Ascending aorta (tissue), 2 donors: ENCODE measurements at regions of chr15 and their contacts with region 1.

Region 1: DNA sequence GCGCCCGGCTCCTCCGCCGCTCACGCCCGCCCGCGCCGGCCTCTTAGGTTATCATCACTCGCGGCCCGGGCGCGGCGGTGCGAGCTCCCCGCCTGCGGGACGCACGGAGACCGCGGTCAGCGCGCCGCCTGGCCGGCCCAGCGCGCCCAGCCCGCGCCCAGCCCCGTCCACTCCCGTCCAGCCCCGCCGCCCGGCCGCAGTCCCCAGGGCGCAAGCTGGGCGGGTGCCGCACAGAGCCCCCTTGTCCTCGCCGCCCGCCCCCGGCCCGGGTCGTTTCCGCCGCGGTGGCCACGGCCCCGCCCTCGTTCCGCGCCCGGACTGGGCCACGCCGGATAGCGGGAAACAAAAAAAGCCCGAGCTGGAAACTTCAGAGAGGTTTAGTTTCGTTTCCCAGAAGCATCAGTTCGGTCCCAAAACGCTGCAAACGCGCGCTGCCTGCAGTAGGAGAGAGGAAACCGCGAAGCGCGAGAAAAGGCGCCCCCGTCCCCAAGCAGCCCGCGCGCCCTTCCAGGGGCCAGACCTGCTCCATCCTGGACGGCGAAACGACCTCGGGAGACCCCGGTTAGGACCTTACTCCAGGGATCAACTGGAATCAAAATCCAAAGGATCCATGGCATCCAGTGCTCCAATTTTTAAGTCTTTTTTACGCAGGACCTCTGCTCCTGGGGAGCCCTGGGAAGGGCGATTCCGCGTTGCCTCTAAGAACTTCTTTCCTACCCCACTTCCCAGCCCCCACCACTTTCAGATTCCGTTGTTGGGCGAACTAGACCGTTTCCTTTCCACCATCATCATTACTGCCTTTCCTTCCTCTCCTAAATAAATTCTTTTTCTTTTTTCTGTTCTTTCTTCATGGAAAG is at the start of gene ATP10A:
- DNase-seq: peak in 1 of 2 donors; percentile 75
- H3K4me3 ChIP-seq: peak within 1 kb of the TSS; percentile 80 to 96
- H3K27ac ChIP-seq: peak within 1 kb of the TSS; percentile 94 to 95
- H3K4me1 ChIP-seq: peaks cover 7 to 18% of the 10 kb centered on the region in 2 donors
- H3K27me3 ChIP-seq: no peaks in the 10 kb centered on the region
- CTCF ChIP-seq: peak in 1 of 3 experiments; percentile 20
- total RNA-seq, gene ATP10A: 26.7 TPM

Region 2: GRCh38 chr15:24772686-24773373 is 1090.5 kb before region 1 on chr15:
- intact Hi-C with region 1: loop called (anchors 10 kb)
- DNase-seq: peak in 1 of 2 donors; percentile 79
- H3K4me3 ChIP-seq: peak overlapping the region; percentile 38 to 62
- H3K27ac ChIP-seq: peak overlapping the region; percentile 31 to 61
- H3K4me1 ChIP-seq: no peaks in the 10 kb centered on the region
- H3K27me3 ChIP-seq: no peaks in the 10 kb centered on the region
- CTCF ChIP-seq: no peak

Region 3: GRCh38 chr15:25568751-25569150 is 294.6 kb before region 1 on chr15:
- intact Hi-C with region 1: loop called (anchors 5 kb)
- DNase-seq: peak; percentile 25 to 83
- H3K4me3 ChIP-seq: no peak overlapping the region
- H3K27ac ChIP-seq: peak overlapping the region; percentile 75 to 77
- H3K4me1 ChIP-seq: peaks cover 4 to 61% of the 10 kb centered on the region in 2 donors
- H3K27me3 ChIP-seq: no peaks in the 10 kb centered on the region
- CTCF ChIP-seq: no peak

Region 4: DNA sequence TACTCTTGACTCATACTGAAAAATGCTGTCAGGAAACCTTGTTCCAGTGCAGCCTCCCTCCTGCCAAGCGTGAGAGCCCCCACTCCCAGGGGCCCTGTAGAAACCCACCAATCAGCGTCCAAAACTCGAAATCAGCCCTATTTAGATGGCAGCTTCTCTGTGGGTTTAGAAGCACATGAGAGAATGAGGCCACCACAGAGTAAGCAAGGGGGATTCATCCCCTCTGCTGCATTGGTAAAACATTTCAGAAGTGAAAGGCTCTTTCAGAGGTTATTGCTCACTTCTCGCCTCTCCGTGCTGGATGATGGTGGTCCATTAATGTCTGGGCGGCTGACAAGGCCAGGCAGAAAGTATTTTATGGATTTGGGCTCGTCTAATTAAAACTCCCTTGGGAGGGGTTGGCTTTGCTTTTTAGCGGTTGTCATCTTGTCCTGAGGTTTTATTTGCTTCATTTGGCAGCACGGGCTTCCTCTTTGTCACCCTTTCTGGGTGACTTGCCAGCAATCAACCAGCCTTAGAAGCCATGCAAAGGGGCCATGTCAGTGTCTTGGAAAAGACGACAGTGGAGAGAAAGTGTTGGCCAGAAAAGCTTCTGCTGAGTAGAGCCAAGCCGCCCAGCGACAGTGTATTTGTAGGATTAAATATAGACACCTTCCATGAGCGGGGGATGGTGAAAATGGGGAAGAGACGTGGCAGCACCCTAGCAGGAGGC is 145.7 kb before region 1 on chr15:
- intact Hi-C with region 1: loop called (anchors 2 kb)
- DNase-seq: peak in 1 of 2 donors; percentile 81
- H3K4me3 ChIP-seq: no peak overlapping the region
- H3K27ac ChIP-seq: peak overlapping the region; percentile 84
- H3K4me1 ChIP-seq: peaks cover 5 to 38% of the 10 kb centered on the region in 2 donors
- H3K27me3 ChIP-seq: no peaks in the 10 kb centered on the region
- CTCF ChIP-seq: no peak

Region 5: GRCh38 chr15:25775317-25775912 is 87.9 kb before region 1 on chr15:
- intact Hi-C with region 1: no loop called
- DNase-seq: no peak
- H3K4me3 ChIP-seq: no peak overlapping the region
- H3K27ac ChIP-seq: peak overlapping the region in 1 of 2 donors; percentile 41
- H3K4me1 ChIP-seq: peaks cover 9 to 25% of the 10 kb centered on the region in 2 donors
- H3K27me3 ChIP-seq: no peaks in the 10 kb centered on the region
- CTCF ChIP-seq: no peak

Region 6: DNA sequence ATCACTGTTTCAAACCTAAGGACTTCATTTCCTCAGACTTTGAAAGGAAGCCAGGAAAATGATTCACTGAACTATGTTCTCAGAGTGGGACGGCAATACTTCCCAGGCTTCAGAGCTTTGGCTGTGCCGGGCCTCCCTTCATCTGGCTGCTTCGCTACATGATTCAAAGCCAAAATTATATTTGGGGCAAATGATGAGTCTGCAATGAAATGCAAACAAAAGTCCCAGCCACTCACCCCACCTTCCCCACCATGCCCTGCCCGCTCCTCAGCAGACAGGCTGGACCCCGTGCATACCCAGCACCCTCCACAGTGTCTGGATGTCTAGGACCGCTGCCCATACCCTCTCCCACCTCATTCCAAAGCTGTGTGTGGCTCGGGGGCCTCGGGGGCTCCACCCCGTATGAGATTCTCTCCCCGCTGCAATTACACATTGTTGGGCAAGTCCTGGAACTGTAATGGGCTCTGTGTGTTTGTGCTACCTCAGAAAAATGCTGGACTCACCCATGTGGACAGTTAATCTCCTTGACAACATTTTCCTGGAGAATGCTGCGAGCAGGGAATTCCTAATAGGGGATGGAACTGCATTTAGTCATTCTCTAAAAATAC is 32.4 kb before region 1 on chr15:
- intact Hi-C with region 1: loop called (anchors 2 kb)
- DNase-seq: peak; percentile 78 to 96
- H3K4me3 ChIP-seq: peak overlapping the region in 1 of 2 donors; percentile 1
- H3K27ac ChIP-seq: peak overlapping the region; percentile 95 to 98
- H3K4me1 ChIP-seq: peaks cover 15 to 29% of the 10 kb centered on the region in 2 donors
- H3K27me3 ChIP-seq: no peaks in the 10 kb centered on the region
- CTCF ChIP-seq: no peak

Region 7: DNA sequence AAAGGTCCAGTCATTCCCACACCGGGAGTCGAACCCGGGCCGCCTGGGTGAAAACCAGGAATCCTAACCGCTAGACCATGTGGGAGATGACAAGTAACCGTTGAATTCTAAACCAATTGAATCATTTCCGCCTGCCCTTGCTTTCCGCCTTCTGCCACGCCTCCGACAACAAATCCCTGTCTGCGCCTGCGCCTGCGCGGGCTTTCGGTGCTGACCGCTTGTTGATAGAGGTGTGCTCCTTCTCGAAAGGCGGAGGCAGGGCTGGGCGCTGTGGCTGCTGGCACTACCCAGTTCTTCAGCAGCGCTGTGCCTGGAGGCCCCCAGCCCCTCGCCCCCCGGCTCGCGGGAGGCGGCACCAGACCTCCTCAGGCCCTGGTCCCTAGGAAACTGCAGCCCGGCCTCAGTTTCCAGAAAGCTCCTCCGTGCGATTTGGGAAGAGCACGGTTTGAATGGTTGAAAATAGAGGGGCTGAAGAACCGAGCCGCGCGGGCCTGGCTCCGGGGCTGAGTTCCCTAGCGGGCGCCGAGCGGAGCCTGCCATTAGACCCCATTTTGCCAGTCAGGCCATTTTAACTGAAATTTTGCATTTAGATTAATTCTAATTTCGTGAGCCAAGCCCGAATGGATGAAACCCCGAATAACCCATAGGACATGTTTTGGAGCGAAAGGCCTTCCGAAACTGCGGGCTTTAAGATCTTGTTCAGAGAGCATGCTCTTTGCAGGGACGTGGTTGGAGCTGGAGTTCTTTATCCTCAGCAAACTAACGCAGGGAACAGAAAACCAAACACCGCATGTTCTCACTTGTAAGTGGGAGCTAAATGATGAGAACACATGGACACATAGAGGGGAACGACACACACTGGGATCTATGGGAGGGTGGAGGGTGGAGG is 219.1 kb after region 1 on chr15:
- intact Hi-C with region 1: loop called (anchors 5 kb)
- DNase-seq: peak; percentile 90 to 99
- H3K4me3 ChIP-seq: peak overlapping the region; percentile 68 to 89
- H3K27ac ChIP-seq: peak overlapping the region; percentile 89 to 92
- H3K4me1 ChIP-seq: peaks cover 0 to 7% of the 10 kb centered on the region in 2 donors
- H3K27me3 ChIP-seq: no peaks in the 10 kb centered on the region
- CTCF ChIP-seq: peak in 1 of 3 experiments; percentile 15